OCI-LY7 (cell line): ENCODE measurements at regions of chr11 and their contacts with region 1.

Region 1: GRCh38 chr11:119196833-119197483 is 9.2 kb upstream of the CBL start:
- DNase-seq: peak; percentile 89
- H3K4me3 ChIP-seq: no peak overlapping the region
- H3K27ac ChIP-seq: no peak overlapping the region
- H3K4me1 ChIP-seq: peaks cover 3% of the 10 kb centered on the region
- CTCF ChIP-seq: peak; percentile 96

Region 2: GRCh38 chr11:119057000-119057769 is 139.8 kb before region 1 on chr11 and contains the start of gene HYOU1:
- CTCF ChIA-PET with region 1: no interaction called
- POLR2A ChIA-PET with region 1: no interaction called
- intact Hi-C with region 1: loop called (anchors 2 kb)
- DNase-seq: peak; percentile 99
- H3K4me3 ChIP-seq: peak within 1 kb of the TSS; percentile 82
- H3K27ac ChIP-seq: peak within 1 kb of the TSS; percentile 65
- H3K4me1 ChIP-seq: peaks cover 13% of the 10 kb centered on the region
- CTCF ChIP-seq: peak; percentile 50; the same call in 1 of the 2 replicates
- total RNA-seq, gene HYOU1: 86.6 and 97.6 TPM in 2 replicates

Region 3: GRCh38 chr11:119144825-119145486 is 52.0 kb before region 1 on chr11:
- CTCF ChIA-PET with region 1: no interaction called
- POLR2A ChIA-PET with region 1: interaction called, 5 read pairs
- intact Hi-C with region 1: loop called (anchors 1 kb)
- DNase-seq: peak; percentile 67
- H3K4me3 ChIP-seq: no peak overlapping the region
- H3K27ac ChIP-seq: no peak overlapping the region
- H3K4me1 ChIP-seq: peaks cover 17% of the 10 kb centered on the region
- CTCF ChIP-seq: peak; percentile 55

Region 4: GRCh38 chr11:119168471-119169281 is 28.3 kb before region 1 on chr11 and contains the start of gene NLRX1:
- CTCF ChIA-PET with region 1: no interaction called
- POLR2A ChIA-PET with region 1: interaction called, 3 read pairs
- intact Hi-C with region 1: loop called (anchors 1 kb)
- DNase-seq: peak; percentile 85
- H3K4me3 ChIP-seq: peak within 1 kb of the TSS; percentile 68
- H3K27ac ChIP-seq: no peak within 1 kb of the TSS
- H3K4me1 ChIP-seq: peaks cover 11% of the 10 kb centered on the region
- CTCF ChIP-seq: peak; percentile 87
- total RNA-seq, gene NLRX1: 2.1 and 2.8 TPM in 2 replicates

Region 5: GRCh38 chr11:119181677-119182412 is 15.1 kb before region 1 on chr11:
- CTCF ChIA-PET with region 1: no interaction called
- POLR2A ChIA-PET with region 1: no interaction called
- intact Hi-C with region 1: no loop called
- DNase-seq: no peak
- H3K4me3 ChIP-seq: no peak overlapping the region
- H3K27ac ChIP-seq: no peak overlapping the region
- H3K4me1 ChIP-seq: peaks cover 11% of the 10 kb centered on the region
- CTCF ChIP-seq: no peak

Region 6: GRCh38 chr11:119222308-119222707 is 25.4 kb after region 1 on chr11:
- CTCF ChIA-PET with region 1: no interaction called
- POLR2A ChIA-PET with region 1: no interaction called
- intact Hi-C with region 1: no loop called
- DNase-seq: no peak
- H3K4me3 ChIP-seq: no peak overlapping the region
- H3K27ac ChIP-seq: no peak overlapping the region
- H3K4me1 ChIP-seq: peaks cover 7% of the 10 kb centered on the region
- CTCF ChIP-seq: no peak